ENCODE measurements at regions of chr13 and their contacts with region 1.

Region 1: DNA sequence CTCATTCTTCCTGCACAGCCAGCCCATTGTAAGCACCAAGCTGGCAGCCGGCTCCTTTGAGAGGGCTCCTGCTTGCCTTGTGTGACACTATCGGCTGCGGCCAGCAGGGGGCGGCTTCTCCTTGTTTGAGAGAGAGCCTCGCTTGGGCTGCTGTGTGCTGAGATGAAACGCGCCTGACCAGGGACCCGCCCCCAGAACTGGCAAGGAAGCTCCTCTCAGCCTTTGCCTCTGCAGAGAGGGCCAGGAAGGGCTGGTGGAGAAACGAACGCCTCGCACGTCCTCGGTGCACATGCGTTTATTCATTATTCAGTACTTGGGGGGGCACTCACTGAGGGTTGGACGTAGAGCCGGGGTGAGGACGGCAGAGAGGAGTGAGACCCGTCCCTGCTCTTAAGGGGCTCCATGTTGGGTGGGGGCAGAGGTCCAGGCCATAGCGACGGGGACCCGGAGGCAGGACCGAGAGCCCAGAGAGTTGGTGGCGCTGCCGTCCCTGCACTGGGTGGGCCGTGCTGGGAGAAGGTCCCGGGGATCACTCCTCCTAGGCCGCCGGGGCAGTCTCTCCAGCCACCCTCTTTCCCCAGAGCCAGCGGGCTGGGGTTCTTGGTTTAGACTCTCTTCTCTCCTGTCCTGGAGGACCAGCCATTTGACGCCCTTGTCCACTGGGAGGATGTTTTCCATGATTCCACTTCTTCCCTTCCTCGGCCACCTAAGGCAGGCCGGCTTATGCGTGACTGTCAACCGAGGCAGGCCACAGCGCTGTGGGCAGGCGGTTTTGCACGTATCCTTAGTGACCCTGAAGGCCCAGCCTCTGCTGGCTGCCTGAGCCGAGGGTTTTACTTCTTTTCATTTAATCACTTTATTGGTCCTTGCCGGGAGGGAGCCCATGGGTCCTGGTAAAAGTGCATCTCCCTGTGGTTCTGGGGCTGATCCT is 174.5 kb downstream of the KATNAL1 start:
- DNase-seq: peak; percentile 99
- ATAC-seq: peak; percentile 98
- H3K4me3 Mint-ChIP-seq: no peak overlapping the region
- H3K27ac Mint-ChIP-seq: no peak overlapping the region; the same call in 1 of the 2 replicates
- H3K4me1 Mint-ChIP-seq: peaks cover 6% of the 10 kb centered on the region; the same call in 1 of the 2 replicates
- H3K27me3 Mint-ChIP-seq: peaks cover 4% of the 10 kb centered on the region
- CTCF ChIP-seq: peak; percentile 96

Region 2: DNA sequence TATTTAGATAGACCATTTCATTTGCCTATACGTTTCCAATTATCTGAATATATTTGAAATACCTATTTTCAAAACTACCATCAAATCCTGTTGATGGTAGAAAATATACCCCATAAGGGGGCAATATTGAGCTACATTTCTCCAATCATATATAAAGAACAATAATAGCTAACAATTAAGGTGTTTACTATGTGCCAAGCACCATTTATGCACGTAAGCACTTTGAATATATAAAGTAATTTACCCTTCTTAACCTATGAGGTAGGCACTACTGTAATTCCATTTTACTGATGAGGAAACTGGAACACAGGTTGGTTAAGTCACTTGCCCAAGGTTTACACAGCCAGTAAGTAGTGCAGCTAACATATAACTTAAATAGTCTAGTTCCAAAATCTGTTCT is 361.6 kb before region 1 on chr13:
- CTCF ChIA-PET with region 1: interaction called, 10 read pairs
- POLR2A ChIA-PET with region 1: no interaction called
- DNase-seq: no peak
- ATAC-seq: no peak
- H3K4me3 Mint-ChIP-seq: no peak overlapping the region
- H3K27ac Mint-ChIP-seq: no peak overlapping the region
- H3K4me1 Mint-ChIP-seq: peaks cover 24% of the 10 kb centered on the region
- H3K27me3 Mint-ChIP-seq: no peaks in the 10 kb centered on the region
- CTCF ChIP-seq: 0 out of 2 replicates have a peak, but pooled peaks have one; percentile 19

Region 3: DNA sequence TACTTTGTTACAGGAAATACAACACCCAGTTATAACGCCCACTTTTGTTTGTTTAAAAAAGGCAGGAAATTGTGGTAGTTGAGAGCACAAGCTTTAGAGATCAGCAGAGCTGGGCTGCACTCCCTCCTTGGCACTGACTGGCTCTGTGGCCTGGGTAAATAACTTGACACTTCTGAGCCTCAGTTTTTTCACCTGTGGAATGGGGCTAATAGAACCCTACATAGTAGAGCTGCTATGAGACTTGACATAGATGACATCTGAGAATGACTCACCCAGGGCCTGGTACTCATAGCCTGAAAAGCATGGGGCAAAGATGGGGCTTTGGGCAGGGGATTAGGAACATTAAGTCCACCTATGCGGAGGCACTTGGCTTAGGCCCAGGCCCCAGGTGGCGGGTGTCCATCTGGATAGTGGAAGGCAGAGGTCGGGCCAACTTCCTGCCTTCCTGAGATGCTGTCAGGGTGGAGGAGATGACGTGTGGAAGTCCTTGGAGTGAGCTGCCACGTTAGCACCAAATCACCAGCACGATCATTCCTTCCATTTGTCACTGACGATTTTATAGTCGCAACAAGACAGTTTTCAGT is 15.4 kb after region 1 on chr13:
- CTCF ChIA-PET with region 1: interaction called, 14 read pairs
- POLR2A ChIA-PET with region 1: no interaction called
- DNase-seq: no peak
- ATAC-seq: no peak
- H3K4me3 Mint-ChIP-seq: no peak overlapping the region
- H3K27ac Mint-ChIP-seq: no peak overlapping the region
- H3K4me1 Mint-ChIP-seq: no peaks in the 10 kb centered on the region
- H3K27me3 Mint-ChIP-seq: no peaks in the 10 kb centered on the region
- CTCF ChIP-seq: no peak

Region 4: DNA sequence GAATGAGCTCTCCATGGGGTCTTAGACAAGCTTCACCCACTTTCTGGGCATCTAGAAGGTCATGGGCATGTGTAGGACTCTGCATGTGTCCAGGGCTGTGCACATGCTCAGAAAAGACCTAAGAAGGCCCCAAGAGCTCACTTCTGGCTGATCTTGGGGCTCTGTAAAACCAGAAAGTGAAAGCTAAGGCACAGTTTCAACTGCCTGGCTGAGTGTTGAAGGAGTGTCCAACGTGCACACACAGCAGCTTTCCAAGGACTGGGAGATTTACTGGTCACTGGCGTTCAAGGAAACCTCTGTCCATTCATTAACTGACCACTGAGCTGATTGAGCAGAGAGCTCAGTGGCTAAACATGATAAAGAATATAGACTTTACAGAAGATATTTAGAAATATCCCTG is 36.6 kb after region 1 on chr13:
- CTCF ChIA-PET with region 1: interaction called, 12 read pairs
- POLR2A ChIA-PET with region 1: no interaction called
- DNase-seq: no peak
- ATAC-seq: no peak
- H3K4me3 Mint-ChIP-seq: no peak overlapping the region
- H3K27ac Mint-ChIP-seq: no peak overlapping the region
- H3K4me1 Mint-ChIP-seq: peaks cover 35% of the 10 kb centered on the region
- H3K27me3 Mint-ChIP-seq: no peaks in the 10 kb centered on the region; the same call in 1 of the 2 replicates
- CTCF ChIP-seq: no peak

Region 5: GRCh38 chr13:30196025-30196424 is 63.1 kb after region 1 on chr13:
- CTCF ChIA-PET with region 1: interaction called, 11 read pairs
- POLR2A ChIA-PET with region 1: no interaction called
- DNase-seq: peak; percentile 55
- ATAC-seq: peak; percentile 96
- H3K4me3 Mint-ChIP-seq: no peak overlapping the region
- H3K27ac Mint-ChIP-seq: no peak overlapping the region
- H3K4me1 Mint-ChIP-seq: peaks cover 40% of the 10 kb centered on the region
- H3K27me3 Mint-ChIP-seq: no peaks in the 10 kb centered on the region; the same call in 1 of the 2 replicates
- CTCF ChIP-seq: no peak

Region 6: GRCh38 chr13:30334663-30335386 is 201.9 kb after region 1 on chr13:
- CTCF ChIA-PET with region 1: interaction called, 22 read pairs
- POLR2A ChIA-PET with region 1: no interaction called
- DNase-seq: peak; percentile 25
- ATAC-seq: peak; percentile 67
- H3K4me3 Mint-ChIP-seq: no peak overlapping the region
- H3K27ac Mint-ChIP-seq: no peak overlapping the region
- H3K4me1 Mint-ChIP-seq: peaks cover 13% of the 10 kb centered on the region
- H3K27me3 Mint-ChIP-seq: no peaks in the 10 kb centered on the region
- CTCF ChIP-seq: peak; percentile 80

Region 7: DNA sequence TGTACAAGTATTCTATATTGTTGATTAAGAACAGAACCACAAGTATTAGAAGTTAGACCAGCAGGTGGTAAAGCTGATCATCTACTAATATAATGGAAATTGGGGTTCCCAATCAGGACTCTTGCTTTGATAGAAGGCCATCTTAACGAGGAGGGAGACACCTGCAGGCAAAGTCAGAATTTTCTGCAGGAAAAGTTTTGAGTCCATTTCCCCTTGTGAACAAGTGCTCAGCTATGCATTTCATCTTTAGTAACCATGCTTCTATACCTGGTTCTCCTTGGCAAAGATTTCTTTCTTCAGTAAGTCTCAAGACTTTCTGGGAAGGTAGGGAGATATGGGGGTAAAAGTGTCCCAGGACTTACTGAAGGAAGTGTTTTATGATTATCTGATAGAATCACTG is 448.7 kb after region 1 on chr13:
- CTCF ChIA-PET with region 1: interaction called, 31 read pairs
- POLR2A ChIA-PET with region 1: no interaction called
- DNase-seq: no peak
- ATAC-seq: peak; percentile 51
- H3K4me3 Mint-ChIP-seq: no peak overlapping the region
- H3K27ac Mint-ChIP-seq: no peak overlapping the region
- H3K4me1 Mint-ChIP-seq: no peaks in the 10 kb centered on the region
- H3K27me3 Mint-ChIP-seq: no peaks in the 10 kb centered on the region
- CTCF ChIP-seq: no peak